PC-3 (cell line): ENCODE measurements at regions of chr22 and their contacts with region 1.

Region 1: DNA sequence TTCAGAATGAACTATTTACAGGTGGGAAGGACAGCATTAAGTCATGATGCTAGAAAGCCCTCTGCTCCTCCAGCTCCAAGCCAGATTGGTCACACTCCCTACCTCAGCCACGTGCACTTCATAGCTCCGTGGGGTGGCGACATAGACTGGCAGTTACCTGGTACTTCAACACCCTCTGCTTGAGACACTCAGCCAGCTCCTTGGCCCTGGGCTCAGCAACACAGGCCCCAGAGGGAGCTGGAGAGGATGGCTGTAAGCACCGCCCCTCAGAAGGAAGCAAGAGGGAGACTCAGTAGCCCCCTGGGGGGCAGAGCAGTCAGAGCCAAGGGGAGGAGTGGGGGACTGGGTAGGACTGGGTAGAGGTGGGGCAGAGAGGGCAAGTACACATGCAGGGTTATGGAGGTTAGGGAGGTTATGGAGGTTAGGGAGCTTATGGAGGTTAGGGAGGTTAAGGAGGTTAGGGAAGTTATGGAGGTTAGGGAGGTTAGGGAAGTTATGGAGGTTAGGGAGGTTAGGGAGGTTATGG is 102.1 kb upstream of the BID start:
- DNase-seq: no peak
- ATAC-seq: no peak
- H3K4me3 ChIP-seq: no peak overlapping the region
- H3K27ac ChIP-seq: no peak overlapping the region
- H3K4me1 ChIP-seq: no peaks in the 10 kb centered on the region
- H3K27me3 ChIP-seq: no peaks in the 10 kb centered on the region
- CTCF ChIP-seq: no peak

Region 2: DNA sequence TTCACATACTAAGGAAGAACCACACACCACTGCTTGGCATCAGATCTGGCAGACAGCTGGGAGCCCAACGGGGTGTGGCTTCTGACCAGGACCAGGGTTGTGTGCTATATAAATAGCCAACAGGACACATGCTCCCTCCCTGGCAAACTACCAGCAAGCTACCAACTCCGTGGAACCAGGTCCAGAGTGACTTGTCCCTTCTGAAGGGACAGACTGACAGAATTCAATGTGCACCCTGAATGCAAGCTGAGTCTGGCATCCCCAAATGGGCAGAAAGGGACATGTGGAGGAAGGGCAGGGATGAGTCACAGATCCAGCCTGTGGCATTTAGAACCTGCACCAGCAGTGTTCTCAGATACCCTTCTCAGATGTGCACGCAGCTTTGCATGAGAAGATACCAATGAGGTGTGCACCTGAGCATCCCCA is 55.0 kb after region 1 on chr22:
- CTCF ChIA-PET with region 1: interaction called, 12 read pairs
- POLR2A ChIA-PET with region 1: no interaction called
- intact Hi-C with region 1: no loop called
- DNase-seq: peak; percentile 32
- ATAC-seq: peak; percentile 69
- H3K4me3 ChIP-seq: no peak overlapping the region
- H3K27ac ChIP-seq: no peak overlapping the region
- H3K4me1 ChIP-seq: peaks cover 12% of the 10 kb centered on the region
- H3K27me3 ChIP-seq: no peaks in the 10 kb centered on the region
- CTCF ChIP-seq: no peak